ENCODE measurements at regions of chr1 and their contacts with region 1.

Region 1: DNA sequence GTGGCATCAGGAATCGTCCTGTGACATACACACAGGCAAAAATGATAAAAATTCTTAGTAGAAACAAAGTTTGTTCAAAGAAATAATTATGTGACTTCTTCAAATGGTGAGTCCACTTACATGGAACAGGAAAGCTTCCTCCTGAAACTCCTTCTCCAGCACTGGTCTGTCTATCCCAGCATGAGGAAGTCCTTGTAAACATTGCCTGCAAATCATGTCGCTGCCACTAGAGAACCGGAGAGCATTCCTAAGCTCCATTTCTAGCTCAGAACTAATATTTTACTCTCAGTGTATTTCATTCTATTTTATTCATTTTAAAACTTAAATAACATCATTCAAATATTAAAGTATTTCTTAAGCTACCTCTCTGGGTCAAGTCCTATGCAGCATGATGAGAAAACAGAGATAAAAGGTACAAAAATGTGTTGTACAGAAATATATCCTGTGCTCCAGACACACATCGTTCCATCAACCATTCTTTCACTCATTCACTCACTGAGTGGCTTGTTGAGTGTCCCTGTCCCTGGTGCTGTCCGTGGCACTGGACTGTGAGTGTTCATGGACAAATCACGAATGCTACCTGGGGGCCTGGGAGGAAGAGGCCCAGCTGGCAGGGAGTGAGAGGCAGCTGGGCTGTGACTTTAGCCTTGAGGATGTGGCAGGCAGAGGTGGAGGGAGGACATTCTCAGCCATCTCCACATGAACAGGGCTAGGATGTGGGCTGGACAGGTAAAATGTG is 10.0 kb downstream of the CYP4A22 start:
- DNase-seq: no peak
- ATAC-seq: peak; percentile 49; the same call in 1 of the 3 replicates
- H3K4me3 ChIP-seq: no peak overlapping the region
- H3K27ac ChIP-seq: no peak overlapping the region
- H3K4me1 ChIP-seq: no peaks in the 10 kb centered on the region
- H3K27me3 ChIP-seq: no peaks in the 10 kb centered on the region
- CTCF ChIP-seq: no peak
- EP300 ChIP-seq: no peak
- POLR2A ChIP-seq: no peak
- RAD21 ChIP-seq: no peak

Region 2: GRCh38 chr1:46948629-46949274 is 198.5 kb before region 1 on chr1:
- CTCF ChIA-PET with region 1: no interaction called
- POLR2A ChIA-PET with region 1: no interaction called
- in situ Hi-C with region 1: loop called (anchors 25 kb)
- intact Hi-C with region 1: no loop called
- DNase-seq: peak; percentile 20
- ATAC-seq: peak; percentile 69; the same call in 2 of the 3 replicates
- H3K4me3 ChIP-seq: no peak overlapping the region
- H3K27ac ChIP-seq: no peak overlapping the region
- H3K4me1 ChIP-seq: peaks cover 12% of the 10 kb centered on the region
- H3K27me3 ChIP-seq: no peaks in the 10 kb centered on the region
- CTCF ChIP-seq: no peak
- EP300 ChIP-seq: no peak
- POLR2A ChIP-seq: no peak
- RAD21 ChIP-seq: no peak

Region 3: DNA sequence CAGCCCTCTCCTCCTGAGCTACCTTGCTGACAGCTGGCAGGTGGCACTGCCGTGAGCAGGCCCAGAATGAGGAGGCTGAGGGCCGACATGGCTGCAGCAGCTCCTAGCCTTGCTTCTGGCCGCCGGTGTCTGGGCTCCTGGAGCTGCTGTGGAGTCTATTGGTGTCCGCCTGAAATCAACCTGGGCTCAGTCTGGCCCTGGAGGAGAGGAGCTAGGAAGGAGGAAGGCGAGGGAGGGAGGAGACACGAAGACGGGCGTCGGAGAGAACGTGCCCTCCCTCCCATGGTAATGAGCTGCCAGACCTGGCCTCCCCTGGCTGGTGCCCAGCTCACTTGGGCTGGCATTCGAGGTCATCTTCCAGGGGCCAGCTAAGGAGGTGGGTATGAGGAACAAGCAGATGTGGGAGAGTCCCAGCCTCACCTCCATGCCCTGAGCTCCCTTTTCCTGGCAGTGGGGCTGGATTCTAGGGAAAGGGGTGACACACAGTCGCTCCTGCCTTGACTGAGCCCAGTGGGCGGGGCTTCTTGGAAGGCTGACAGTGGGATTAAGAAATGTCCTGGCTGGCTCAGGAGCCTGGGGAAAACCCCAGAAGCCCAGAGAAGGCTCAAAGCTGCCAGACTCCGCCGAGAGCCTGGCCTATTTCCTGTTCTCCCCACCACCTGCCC is 42.8 kb after region 1 on chr1 and contains the start of gene PDZK1IP1:
- CTCF ChIA-PET with region 1: no interaction called
- POLR2A ChIA-PET with region 1: no interaction called
- in situ Hi-C with region 1: no loop called
- intact Hi-C with region 1: no loop called
- DNase-seq: no peak
- ATAC-seq: no peak
- H3K4me3 ChIP-seq: no peak within 1 kb of the TSS
- H3K27ac ChIP-seq: peak within 1 kb of the TSS; percentile 92
- H3K4me1 ChIP-seq: peaks cover 100% of the 10 kb centered on the region
- H3K27me3 ChIP-seq: no peaks in the 10 kb centered on the region
- CTCF ChIP-seq: no peak
- EP300 ChIP-seq: no peak
- POLR2A ChIP-seq: no peak
- RAD21 ChIP-seq: no peak
- total RNA-seq, gene PDZK1IP1: 0.24 TPM in 1 of 2 replicates, not detected in the other